ENCODE measurements at regions of chr17 and their contacts with region 1.

Region 1: DNA sequence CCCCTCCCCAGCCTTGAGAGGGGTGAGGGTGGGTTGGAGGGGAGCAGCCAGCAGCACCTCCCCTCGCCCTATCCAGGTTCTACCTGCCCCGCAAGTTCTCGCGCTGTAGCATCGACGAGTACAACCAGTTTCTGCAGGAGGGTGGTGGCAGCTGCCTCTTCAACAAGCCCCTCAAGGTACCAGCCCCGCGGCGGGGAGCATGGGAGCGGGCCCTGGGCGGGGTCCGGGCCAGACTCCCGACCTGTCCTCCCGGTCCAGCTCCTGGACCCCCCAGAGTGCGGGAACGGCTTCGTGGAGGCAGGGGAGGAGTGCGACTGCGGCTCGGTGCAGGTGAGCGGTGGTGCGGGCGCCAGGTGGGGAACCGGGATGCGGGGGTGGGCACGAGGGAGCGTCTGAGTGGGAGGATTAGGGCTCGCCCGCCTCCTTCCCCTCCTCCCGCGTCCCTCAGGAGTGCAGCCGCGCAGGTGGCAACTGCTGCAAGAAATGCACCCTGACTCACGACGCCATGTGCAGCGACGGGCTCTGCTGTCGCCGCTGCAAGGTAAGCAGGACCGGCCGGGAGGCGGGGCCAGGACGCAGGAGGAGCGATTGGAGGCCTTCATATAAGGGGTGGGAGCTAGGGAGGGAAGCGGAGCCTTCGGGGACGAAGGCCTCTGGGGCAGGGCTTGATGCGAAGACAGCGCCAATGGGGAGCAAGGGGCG is 16.5 kb downstream of the ADAM11 start:
- DNase-seq: peak; percentile 97
- ATAC-seq: peak; percentile 90 to 96 (median 94)
- H3K4me3 ChIP-seq: peak overlapping the region; percentile 37 to 71 (median 62)
- H3K27ac ChIP-seq: peak overlapping the region in 4 of 10 donors; percentile 5 to 45 (median 13)
- H3K4me1 ChIP-seq: peaks cover 4 to 34% (median 27%) of the 10 kb centered on the region in 9 donors
- H3K27me3 ChIP-seq: peaks cover 0 to 22% (median 0%) of the 10 kb centered on the region in 7 donors
- CTCF ChIP-seq: peak in 5 of 9 donors; percentile 6 to 39 (median 25)

Region 2: DNA sequence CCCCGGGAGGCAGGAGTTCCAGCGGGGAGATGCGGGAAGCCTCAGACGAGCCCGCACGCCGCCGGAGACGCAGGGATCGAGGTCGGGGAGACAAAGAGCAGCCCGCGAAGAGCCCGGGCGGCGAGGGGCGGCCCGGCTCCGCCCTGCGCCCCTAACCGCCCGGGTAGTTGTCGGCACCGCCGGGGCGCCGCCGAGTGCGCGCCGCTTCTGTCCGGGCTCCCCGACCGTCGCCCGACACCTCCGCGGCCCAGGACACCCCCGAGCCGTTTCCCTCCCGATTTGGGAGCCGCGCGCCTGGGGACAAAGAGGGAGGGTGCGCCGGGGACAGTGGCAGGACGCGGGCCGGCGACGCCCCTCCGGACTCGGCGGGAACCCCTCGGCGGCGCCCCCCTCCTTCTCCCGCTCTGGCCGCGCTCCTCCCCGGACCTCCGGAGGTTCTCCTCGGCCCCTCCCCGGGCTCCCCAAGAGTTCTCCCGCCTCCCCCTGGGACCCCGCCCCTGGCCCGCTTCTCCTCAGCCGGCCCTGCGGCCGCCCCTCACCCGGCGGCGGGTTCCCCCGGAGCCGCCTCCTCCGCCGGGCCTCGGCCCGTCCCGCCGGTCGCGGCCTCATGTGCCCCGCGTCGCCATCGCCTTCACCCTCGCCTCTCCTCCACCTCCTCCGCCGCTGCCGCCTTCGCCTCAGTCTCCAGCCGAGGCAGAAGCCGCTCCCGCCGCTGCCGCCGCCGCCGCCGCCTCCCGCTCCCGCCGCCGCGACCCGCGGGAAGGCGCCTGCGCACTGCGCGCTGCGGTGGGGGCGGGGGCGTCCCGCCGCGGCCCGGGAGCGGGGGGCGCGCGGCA is 54.5 kb after region 1 on chr17 and contains the start of gene GJC1:
- intact Hi-C with region 1: loop called in 7 of 10 experiments (anchors 2 to 5 kb)
- DNase-seq: peak; percentile 38 to 62
- ATAC-seq: peak; percentile 48 to 78 (median 72)
- H3K4me3 ChIP-seq: peak within 1 kb of the TSS; percentile 46 to 86 (median 75)
- H3K27ac ChIP-seq: peak within 1 kb of the TSS; percentile 84 to 94 (median 90)
- H3K4me1 ChIP-seq: peaks cover 0 to 31% (median 17%) of the 10 kb centered on the region in 9 donors
- H3K27me3 ChIP-seq: peaks cover 0 to 84% (median 15%) of the 10 kb centered on the region in 7 donors
- CTCF ChIP-seq: no peak
- total RNA-seq, gene GJC1: 13.9 to 41.5 (median 23.8) TPM

Region 3: GRCh38 chr17:44878627-44879221 is 103.4 kb after region 1 on chr17:
- intact Hi-C with region 1: loop called in 1 of 10 experiments (anchors 1 kb)
- DNase-seq: peak in 1 of 2 donors; percentile 49
- ATAC-seq: peak in 1 of 8 donors; percentile 28
- H3K4me3 ChIP-seq: no peak overlapping the region
- H3K27ac ChIP-seq: no peak overlapping the region
- H3K4me1 ChIP-seq: no peaks in the 10 kb centered on the region
- H3K27me3 ChIP-seq: no peaks in the 10 kb centered on the region
- CTCF ChIP-seq: peak; percentile 20 to 70 (median 65)

Region 4: DNA sequence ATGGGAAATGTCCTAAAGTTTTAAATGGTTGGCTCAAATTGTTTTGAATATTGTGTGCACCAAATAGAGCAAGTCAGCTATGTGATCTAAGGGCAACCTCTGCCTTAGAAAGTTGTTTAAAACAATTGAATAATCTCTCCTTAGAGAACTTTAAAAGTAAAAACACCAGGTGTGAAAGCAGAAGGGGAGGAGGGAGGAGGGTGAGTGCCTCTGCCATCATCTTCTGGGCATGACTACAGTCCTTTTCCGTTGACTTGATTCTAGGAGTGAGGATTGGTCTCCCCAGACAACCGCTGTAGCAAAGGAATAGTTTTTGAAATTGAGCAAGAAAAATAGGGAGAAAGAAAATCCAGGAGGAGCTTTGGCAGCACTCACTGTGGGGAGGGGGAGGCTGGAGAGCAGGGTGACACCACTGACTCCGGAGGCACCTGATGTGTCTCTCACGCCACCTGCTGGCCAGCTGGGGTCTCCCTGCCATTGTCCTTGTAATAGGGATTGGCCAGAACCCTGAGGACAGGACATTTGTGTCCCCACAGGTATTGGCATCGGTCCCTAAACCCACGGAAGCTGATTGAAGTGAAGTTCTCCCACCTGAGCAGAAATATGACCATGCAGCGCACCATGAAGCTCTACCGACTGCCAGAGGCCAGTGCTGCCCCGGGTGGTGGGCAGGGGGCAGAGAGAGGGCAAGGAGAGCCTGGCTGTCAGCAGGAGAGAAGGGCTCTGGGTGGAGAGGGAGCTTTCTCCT is 323.8 kb after region 1 on chr17:
- intact Hi-C with region 1: loop called in 2 of 10 experiments (anchors 1 to 10 kb)
- DNase-seq: peak; percentile 87 to 88
- ATAC-seq: peak; percentile 70 to 86 (median 78)
- H3K4me3 ChIP-seq: no peak overlapping the region
- H3K27ac ChIP-seq: peak overlapping the region in 7 of 10 donors; percentile 6 to 53 (median 18)
- H3K4me1 ChIP-seq: peaks cover 4 to 55% (median 23%) of the 10 kb centered on the region in 9 donors
- H3K27me3 ChIP-seq: no peaks in the 10 kb centered on the region
- CTCF ChIP-seq: peak; percentile 79 to 94 (median 92)

Region 5: DNA sequence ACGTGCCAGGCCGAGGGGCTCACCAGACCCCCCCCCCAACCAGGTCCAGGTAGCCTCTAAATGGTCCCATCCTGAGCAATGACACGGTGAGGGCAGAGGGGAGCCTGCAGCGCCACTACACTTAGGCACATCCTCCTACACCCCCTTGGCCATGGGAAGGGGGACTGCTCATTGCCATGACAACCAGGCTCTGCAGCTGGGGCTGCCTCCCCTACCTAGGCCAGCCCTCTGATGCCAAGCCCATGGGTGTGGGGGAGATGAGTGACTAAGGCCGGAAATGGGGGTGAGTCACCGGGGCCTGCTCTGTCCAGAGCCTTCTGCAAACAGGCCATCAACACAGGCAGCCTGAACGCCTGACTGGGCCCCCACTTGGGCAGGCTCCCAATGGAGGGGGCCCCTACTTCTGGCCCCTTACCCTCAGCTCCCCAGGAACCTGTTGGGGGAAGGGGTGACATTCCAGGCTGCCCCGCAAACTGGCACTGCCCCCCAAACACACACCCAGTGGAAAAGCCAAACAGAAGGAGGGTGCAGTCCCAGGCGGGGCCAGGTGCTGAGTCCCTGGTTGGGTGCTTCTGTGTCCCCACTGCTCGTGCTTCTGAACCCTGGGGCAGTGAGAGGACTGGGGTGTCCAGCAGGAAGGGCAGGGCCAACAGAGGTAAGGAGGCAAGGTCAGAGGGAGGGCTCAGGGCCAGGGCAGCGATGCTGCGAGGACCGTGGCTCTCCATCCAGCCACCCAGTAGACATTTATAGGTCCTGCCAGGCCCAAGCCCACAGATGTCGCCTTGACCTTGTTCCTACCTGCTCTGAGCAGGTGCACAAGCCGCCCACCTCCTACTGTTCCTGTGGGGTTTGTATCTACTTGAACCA is 348.9 kb after region 1 on chr17:
- intact Hi-C with region 1: loop called in 1 of 10 experiments (anchors 10 kb)
- DNase-seq: peak in 1 of 2 donors; percentile 48
- ATAC-seq: peak in 7 of 8 donors; percentile 17 to 76 (median 56)
- H3K4me3 ChIP-seq: no peak overlapping the region
- H3K27ac ChIP-seq: peak overlapping the region in 7 of 10 donors; percentile 2 to 83 (median 40)
- H3K4me1 ChIP-seq: peaks cover 30 to 61% (median 53%) of the 10 kb centered on the region in 9 donors
- H3K27me3 ChIP-seq: peaks cover 0 to 10% (median 0%) of the 10 kb centered on the region in 7 donors
- CTCF ChIP-seq: no peak

Region 6: DNA sequence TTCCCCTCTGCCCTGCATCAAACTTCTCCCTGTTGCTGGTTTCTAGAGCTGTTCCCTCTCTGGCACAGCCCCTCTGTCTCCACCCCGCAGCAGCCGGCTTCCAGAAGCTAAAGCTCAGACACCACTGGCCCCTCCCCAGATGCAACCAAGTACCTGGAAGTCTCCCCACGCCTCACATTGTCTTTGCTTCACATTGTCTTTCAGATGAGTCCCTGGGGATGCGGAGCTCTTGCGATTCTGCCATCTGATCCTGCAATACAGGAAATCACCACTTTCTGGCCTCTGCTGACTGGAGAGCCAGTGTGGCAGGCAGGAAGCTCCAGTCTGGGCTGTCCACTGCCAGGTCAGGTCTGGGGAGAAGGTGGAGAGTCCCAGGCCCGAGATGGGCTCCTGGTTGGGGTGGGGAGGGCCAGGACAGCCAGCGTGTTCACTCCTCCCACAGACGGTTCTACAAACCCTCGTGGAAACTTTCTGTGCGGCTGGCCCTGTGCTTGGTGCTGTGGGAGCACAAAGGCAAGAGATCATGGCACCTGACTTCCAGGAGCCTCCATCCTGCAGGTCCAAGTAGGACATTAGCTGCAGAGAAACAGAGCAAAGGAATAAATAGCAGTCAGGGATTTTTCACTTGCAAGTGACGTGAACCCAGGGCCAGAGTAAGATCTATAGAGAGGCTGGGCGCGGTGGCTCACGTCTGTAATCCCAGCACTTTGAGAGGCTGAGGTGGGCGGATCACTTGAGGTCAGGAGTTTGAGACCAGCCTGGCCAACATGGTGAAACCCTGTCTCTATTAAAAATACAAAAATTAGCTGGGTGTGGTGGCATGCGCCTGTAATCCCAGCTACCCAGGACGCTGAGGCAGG is 589.5 kb after region 1 on chr17:
- intact Hi-C with region 1: no loop called
- DNase-seq: peak in 1 of 2 donors; percentile 18
- ATAC-seq: peak in 6 of 8 donors; percentile 45 to 73 (median 55)
- H3K4me3 ChIP-seq: no peak overlapping the region
- H3K27ac ChIP-seq: peak overlapping the region in 1 of 10 donors; percentile 41
- H3K4me1 ChIP-seq: peaks cover 0 to 17% (median 4%) of the 10 kb centered on the region in 9 donors
- H3K27me3 ChIP-seq: no peaks in the 10 kb centered on the region
- CTCF ChIP-seq: no peak